CD14-positive monocyte (primary cell): ENCODE measurements at regions of chr18 and their contacts with region 1.

Region 1: GRCh38 chr18:374721-375168 is 106.9 kb upstream of the THOC1 start:
- DNase-seq: peak; percentile 19 to 25 (median 20)
- H3K4me3 ChIP-seq: no peak overlapping the region
- H3K4me3 Mint-ChIP-seq: peak overlapping the region in 1 of 2 donors; percentile 59
- H3K27ac ChIP-seq: no peak overlapping the region
- H3K27ac Mint-ChIP-seq: peak overlapping the region in 3 of 7 donors; percentile 31 to 56 (median 38)
- H3K4me1 ChIP-seq: peaks cover 91 to 94% of the 10 kb centered on the region in 2 donors
- H3K4me1 Mint-ChIP-seq: peaks cover 89% of the 10 kb centered on the region
- H3K27me3 ChIP-seq: no peaks in the 10 kb centered on the region
- H3K27me3 Mint-ChIP-seq: peaks cover 0 to 4% (median 0%) of the 10 kb centered on the region in 3 donors
- CTCF ChIP-seq: no peak

Region 2: DNA sequence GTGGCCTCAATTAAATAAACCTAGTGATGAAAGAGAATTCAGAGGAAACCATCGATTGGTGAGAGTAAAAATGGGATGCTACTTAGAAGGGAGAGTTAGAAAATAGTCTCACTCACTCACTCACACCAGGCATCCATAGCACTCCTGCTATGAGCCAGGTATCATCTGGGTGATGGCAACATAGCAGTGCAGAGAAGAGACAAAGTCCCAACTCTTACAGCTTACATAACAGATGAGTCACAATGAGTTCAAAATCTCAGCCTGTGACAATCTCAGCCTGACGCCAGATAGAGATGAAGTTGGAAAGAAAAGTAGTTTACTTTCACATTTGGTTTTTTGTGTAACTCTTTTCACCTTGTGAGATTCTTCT is 51.5 kb before region 1 on chr18:
- intact Hi-C with region 1: loop called in 1 of 2 experiments (anchors 10 kb)
- DNase-seq: peak; percentile 75 to 89 (median 86)
- H3K4me3 ChIP-seq: no peak overlapping the region
- H3K4me3 Mint-ChIP-seq: peak overlapping the region in 1 of 2 donors; percentile 83
- H3K27ac ChIP-seq: peak overlapping the region in 1 of 2 donors; percentile 39
- H3K27ac Mint-ChIP-seq: peak overlapping the region in 6 of 7 donors; percentile 87 to 96 (median 94)
- H3K4me1 ChIP-seq: peaks cover 22 to 25% of the 10 kb centered on the region in 2 donors
- H3K4me1 Mint-ChIP-seq: peaks cover 19% of the 10 kb centered on the region
- H3K27me3 ChIP-seq: no peaks in the 10 kb centered on the region
- H3K27me3 Mint-ChIP-seq: peaks cover 0 to 4% (median 0%) of the 10 kb centered on the region in 3 donors
- CTCF ChIP-seq: no peak

Region 3: GRCh38 chr18:335733-336132 is 39.0 kb before region 1 on chr18:
- intact Hi-C with region 1: loop called in 1 of 2 experiments (anchors 5 kb)
- DNase-seq: peak; percentile 53 to 86 (median 72)
- H3K4me3 ChIP-seq: no peak overlapping the region
- H3K4me3 Mint-ChIP-seq: no peak overlapping the region
- H3K27ac ChIP-seq: peak overlapping the region in 1 of 2 donors; percentile 50
- H3K27ac Mint-ChIP-seq: peak overlapping the region in 3 of 7 donors; percentile 48 to 75 (median 61)
- H3K4me1 ChIP-seq: peaks cover 43 to 44% of the 10 kb centered on the region in 2 donors
- H3K4me1 Mint-ChIP-seq: peaks cover 47% of the 10 kb centered on the region
- H3K27me3 ChIP-seq: no peaks in the 10 kb centered on the region
- H3K27me3 Mint-ChIP-seq: peaks cover 0 to 1% (median 1%) of the 10 kb centered on the region in 3 donors
- CTCF ChIP-seq: no peak

Region 4: GRCh38 chr18:712401-713134 is 337.8 kb after region 1 on chr18 and contains the start of gene ENOSF1:
- intact Hi-C with region 1: no loop called
- DNase-seq: peak; percentile 55 to 78 (median 73)
- H3K4me3 ChIP-seq: peak within 1 kb of the TSS; percentile 64 to 91 (median 77)
- H3K4me3 Mint-ChIP-seq: peak within 1 kb of the TSS; percentile 86 to 92
- H3K27ac ChIP-seq: peak within 1 kb of the TSS; percentile 40 to 78
- H3K27ac Mint-ChIP-seq: peak within 1 kb of the TSS; percentile 69 to 98 (median 93)
- H3K4me1 ChIP-seq: peaks cover 6 to 13% of the 10 kb centered on the region in 2 donors
- H3K4me1 Mint-ChIP-seq: peaks cover 7% of the 10 kb centered on the region
- H3K27me3 ChIP-seq: peaks cover 7 to 31% of the 10 kb centered on the region in 2 donors
- H3K27me3 Mint-ChIP-seq: peaks cover 22 to 47% (median 28%) of the 10 kb centered on the region in 3 donors
- CTCF ChIP-seq: peak; percentile 97
- polyA plus RNA-seq, gene ENOSF1: 2.2 to 11.6 (median 2.3) TPM